Activated CD4-positive, alpha-beta memory T cell treated with anti-CD3 and anti-CD28 coated beads for 36 hours (primary cell): ENCODE measurements at regions of chr19 and their contacts with region 1.

Region 1: DNA sequence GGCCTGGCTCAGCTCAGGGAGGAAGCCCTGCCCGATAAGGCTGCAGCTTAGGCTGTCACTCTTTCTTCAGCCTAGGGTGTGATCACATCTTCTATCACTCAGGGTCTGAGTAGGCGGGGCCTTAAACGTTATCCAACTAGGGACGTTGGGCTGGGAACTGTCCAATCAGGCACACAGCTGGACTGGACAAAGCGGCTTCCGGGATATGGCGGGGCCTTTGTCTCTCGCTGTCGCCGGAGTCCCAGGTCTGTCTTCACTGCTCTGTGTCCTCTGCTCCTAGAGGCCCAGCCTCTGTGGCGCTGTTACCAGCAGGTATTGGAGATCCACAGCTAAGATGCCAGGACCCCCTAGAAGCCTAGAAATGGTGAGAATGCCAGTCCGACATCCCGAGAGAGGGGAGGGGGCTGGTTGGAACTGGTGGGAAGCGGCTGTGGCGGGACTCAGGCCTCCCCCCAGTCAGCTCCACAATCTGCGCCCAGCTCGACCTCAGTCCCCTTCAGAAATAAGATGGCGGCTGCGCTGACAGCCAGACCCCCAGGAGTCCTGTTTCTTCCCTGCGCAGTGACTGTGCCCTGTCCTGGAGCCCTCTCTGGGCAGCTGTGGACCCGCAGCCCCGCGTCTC is at the start of gene ZNF254:
- DNase-seq: peak; percentile 90
- H3K4me3 Mint-ChIP-seq: peak within 1 kb of the TSS; percentile 95
- H3K27ac Mint-ChIP-seq: peak within 1 kb of the TSS; percentile 91
- H3K4me1 Mint-ChIP-seq: peaks cover 5% of the 10 kb centered on the region
- H3K27me3 Mint-ChIP-seq: no peaks in the 10 kb centered on the region
- total RNA-seq, gene ZNF254: 6.7 to 7.7 TPM

Region 2: DNA sequence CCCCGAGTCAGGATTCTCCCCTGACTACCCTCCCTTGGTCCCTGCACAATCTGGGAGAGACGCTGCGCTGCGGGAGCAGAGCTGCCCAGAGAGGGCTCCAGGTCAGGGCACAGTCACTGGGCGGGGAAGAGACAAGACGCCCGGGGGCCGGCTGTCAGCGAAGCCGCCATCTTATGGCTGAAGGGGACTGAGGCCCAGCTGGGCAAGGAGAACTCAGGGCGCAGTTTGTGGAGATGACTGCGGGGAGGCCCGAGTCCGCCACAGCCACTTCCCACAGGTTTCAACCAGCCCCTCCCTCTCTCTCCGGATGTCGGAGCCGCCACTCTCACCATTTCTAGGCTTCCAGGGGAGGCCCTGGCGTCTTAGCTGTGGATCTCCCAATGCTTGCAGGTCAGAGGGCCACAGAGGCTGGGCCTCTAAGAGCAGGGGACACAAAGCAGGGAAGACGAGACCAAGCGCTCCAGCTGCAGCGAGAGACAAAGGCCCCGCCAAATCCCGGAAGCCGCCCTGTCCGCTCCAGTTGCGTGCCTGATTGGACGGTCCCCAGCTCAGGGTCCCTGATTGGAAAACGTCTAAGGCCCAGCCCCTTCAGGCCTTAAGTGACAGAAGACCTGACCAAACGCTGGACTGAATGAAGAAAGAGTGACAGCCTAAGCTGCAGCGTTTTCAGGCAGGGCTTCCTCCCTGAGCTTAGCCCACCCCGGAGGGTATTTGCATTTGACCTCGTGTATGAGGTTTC is 837.0 kb before region 1 on chr19 and contains the start of gene ZNF724:
- CTCF ChIA-PET with region 1: interaction called, 3 read pairs
- POLR2A ChIA-PET with region 1: no interaction called
- intact Hi-C with region 1: loop called (anchors 5 kb)
- DNase-seq: peak; percentile 94
- H3K4me3 Mint-ChIP-seq: peak within 1 kb of the TSS; percentile 94
- H3K27ac Mint-ChIP-seq: peak within 1 kb of the TSS; percentile 92
- H3K4me1 Mint-ChIP-seq: peaks cover 9% of the 10 kb centered on the region
- H3K27me3 Mint-ChIP-seq: no peaks in the 10 kb centered on the region
- total RNA-seq, gene ZNF724: 13.6 to 14.5 TPM

Region 3: DNA sequence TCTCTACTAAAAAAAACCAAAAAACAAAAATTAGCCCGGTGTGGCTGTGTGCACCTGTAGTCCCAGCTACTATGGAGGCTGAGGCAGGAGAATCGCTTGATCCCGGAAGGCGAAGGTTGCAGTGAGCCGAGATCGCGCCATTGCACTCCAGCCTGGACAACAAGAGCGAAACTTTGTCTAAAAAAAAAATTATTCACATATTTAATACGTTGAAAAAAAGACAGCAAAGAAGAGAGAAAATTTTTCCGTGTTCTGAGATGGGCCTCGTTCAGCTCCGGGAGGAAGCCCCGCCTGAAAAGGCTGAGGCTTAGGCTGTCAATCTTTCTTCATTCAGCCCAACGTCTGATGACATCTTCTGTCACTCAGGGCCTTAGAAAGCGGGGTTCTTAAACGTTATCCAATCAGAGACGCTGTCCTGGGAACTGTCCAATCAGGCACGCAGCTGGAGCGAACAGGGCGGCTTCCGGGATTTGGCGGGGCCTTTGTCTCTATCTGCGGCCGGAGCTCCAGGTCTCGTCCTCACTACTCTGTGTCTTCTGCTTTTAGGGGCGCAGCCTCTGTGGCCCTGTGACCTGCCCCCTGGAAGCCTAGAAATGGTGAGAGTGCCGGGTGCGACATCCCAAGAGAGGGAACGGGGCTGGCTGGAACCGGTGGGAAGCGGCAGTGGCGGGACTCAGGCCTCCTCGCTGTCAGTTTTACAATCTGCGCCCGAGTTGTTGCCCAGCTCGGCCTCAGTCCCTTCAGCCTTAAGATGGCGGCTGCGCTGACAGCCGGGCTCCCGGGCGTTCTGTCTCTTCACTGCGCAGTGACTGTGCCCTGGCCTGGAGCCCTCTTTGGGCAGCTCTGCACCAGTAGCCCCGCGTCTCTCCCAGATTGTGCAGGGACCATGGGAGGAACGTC is 172.4 kb before region 1 on chr19 and contains the start of gene ZNF726:
- CTCF ChIA-PET with region 1: no interaction called
- POLR2A ChIA-PET with region 1: interaction called, 8 read pairs
- intact Hi-C with region 1: loop called (anchors 2 kb)
- DNase-seq: peak; percentile 93
- H3K4me3 Mint-ChIP-seq: peak within 1 kb of the TSS; percentile 95
- H3K27ac Mint-ChIP-seq: peak within 1 kb of the TSS; percentile 91
- H3K4me1 Mint-ChIP-seq: peaks cover 18% of the 10 kb centered on the region
- H3K27me3 Mint-ChIP-seq: no peaks in the 10 kb centered on the region
- total RNA-seq, gene ZNF726: 15.9 to 17.3 TPM

Region 4: DNA sequence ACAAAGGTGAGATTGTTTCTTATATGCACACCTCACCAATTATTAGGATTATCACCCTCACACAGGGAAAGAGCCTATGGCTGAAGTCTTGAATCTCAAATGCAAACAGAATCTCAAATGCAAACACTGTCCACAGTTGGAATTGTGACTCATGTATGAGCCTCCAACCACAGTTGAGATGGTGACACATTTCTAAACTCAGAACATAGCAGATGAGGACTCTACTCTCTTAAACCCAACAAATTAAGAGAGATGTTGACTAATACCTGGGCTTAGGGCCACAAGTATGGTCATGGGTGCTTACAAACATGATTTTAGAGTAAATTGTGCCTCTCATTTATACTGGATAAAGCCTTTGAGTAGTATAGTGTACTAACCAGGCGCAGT is 32.5 kb before region 1 on chr19:
- CTCF ChIA-PET with region 1: no interaction called
- POLR2A ChIA-PET with region 1: no interaction called
- intact Hi-C with region 1: loop called (anchors 1 kb)
- DNase-seq: peak; percentile 28
- H3K4me3 Mint-ChIP-seq: no peak overlapping the region
- H3K27ac Mint-ChIP-seq: peak overlapping the region; percentile 75
- H3K4me1 Mint-ChIP-seq: peaks cover 19% of the 10 kb centered on the region
- H3K27me3 Mint-ChIP-seq: no peaks in the 10 kb centered on the region

Region 5: GRCh38 chr19:24140099-24140498 is 53.0 kb after region 1 on chr19:
- CTCF ChIA-PET with region 1: no interaction called
- POLR2A ChIA-PET with region 1: no interaction called
- intact Hi-C with region 1: no loop called
- DNase-seq: no peak
- H3K4me3 Mint-ChIP-seq: no peak overlapping the region
- H3K27ac Mint-ChIP-seq: no peak overlapping the region
- H3K4me1 Mint-ChIP-seq: no peaks in the 10 kb centered on the region
- H3K27me3 Mint-ChIP-seq: no peaks in the 10 kb centered on the region